ENCODE measurements at regions of chr18 and their contacts with region 1.

Region 1: DNA sequence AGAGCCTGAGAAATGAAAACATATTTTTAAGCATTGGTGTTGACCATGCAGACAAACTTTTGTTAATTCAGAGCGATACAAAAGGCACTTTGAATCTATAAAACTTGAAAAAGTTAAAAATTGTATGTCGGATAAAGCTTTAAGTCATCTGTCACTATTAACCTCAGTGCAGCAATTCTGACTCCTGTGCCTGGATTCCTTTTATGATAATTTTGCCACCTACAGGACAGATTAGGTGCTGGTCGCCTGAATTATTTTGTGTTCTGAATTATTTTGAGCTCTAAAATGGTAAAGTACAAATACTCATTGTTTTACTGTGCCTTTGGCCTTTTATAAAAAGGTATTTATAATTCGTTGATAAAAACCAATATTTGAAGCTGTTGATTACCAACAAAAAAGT is 19.4 kb upstream of the RNF138 start:
- DNase-seq: peak in 2 of 9 experiments; percentile 50 to 65
- ATAC-seq: peak; percentile 48
- H3K4me3 ChIP-seq: no peak overlapping the region
- H3K4me3 Mint-ChIP-seq: no peak overlapping the region
- H3K27ac ChIP-seq: no peak overlapping the region
- H3K27ac Mint-ChIP-seq: no peak overlapping the region
- H3K4me1 ChIP-seq: no peaks in the 10 kb centered on the region
- H3K4me1 Mint-ChIP-seq: peaks cover 17% of the 10 kb centered on the region
- H3K27me3 ChIP-seq: no peaks in the 10 kb centered on the region
- H3K27me3 Mint-ChIP-seq: no peaks in the 10 kb centered on the region
- CTCF ChIP-seq: peak; percentile 65

Region 2: GRCh38 chr18:32086861-32087260 is 14.5 kb after region 1 on chr18:
- CTCF ChIA-PET with region 1: interaction called, 12 read pairs
- POLR2A ChIA-PET with region 1: interaction called, 10 read pairs
- intact Hi-C with region 1: loop called in 1 of 2 experiments (anchors 2 kb)
- DNase-seq: no peak
- ATAC-seq: no peak
- H3K4me3 ChIP-seq: no peak overlapping the region
- H3K4me3 Mint-ChIP-seq: no peak overlapping the region
- H3K27ac ChIP-seq: no peak overlapping the region
- H3K27ac Mint-ChIP-seq: no peak overlapping the region
- H3K4me1 ChIP-seq: peaks cover 29% of the 10 kb centered on the region
- H3K4me1 Mint-ChIP-seq: peaks cover 44% of the 10 kb centered on the region
- H3K27me3 ChIP-seq: no peaks in the 10 kb centered on the region
- H3K27me3 Mint-ChIP-seq: no peaks in the 10 kb centered on the region
- CTCF ChIP-seq: no peak

Region 3: DNA sequence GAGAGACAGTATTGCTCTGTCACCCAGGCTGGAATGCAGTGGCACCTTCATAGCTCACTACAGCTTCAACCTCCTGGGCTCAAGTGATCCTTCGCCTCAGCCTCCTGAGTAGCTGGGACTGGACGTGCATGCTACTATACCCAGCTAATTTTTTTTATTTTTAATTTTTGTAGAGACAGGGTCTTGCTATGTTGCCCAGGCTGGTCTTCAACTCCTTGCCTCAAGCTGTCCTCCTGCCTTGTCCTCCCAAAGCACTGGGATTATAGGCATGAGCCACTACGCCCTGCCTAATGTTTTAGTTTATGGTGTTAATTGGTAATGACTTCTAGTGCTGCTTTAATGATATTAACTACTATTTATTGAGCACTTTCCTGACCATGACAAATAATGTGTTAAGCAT is 37.7 kb after region 1 on chr18:
- CTCF ChIA-PET with region 1: no interaction called
- POLR2A ChIA-PET with region 1: no interaction called
- intact Hi-C with region 1: no loop called
- DNase-seq: no peak
- ATAC-seq: no peak
- H3K4me3 ChIP-seq: no peak overlapping the region
- H3K4me3 Mint-ChIP-seq: no peak overlapping the region
- H3K27ac ChIP-seq: no peak overlapping the region
- H3K27ac Mint-ChIP-seq: no peak overlapping the region
- H3K4me1 ChIP-seq: peaks cover 30% of the 10 kb centered on the region
- H3K4me1 Mint-ChIP-seq: peaks cover 72% of the 10 kb centered on the region
- H3K27me3 ChIP-seq: no peaks in the 10 kb centered on the region
- H3K27me3 Mint-ChIP-seq: no peaks in the 10 kb centered on the region
- CTCF ChIP-seq: no peak